ENCODE measurements at regions of chr2 and their contacts with region 1.

Region 1: DNA sequence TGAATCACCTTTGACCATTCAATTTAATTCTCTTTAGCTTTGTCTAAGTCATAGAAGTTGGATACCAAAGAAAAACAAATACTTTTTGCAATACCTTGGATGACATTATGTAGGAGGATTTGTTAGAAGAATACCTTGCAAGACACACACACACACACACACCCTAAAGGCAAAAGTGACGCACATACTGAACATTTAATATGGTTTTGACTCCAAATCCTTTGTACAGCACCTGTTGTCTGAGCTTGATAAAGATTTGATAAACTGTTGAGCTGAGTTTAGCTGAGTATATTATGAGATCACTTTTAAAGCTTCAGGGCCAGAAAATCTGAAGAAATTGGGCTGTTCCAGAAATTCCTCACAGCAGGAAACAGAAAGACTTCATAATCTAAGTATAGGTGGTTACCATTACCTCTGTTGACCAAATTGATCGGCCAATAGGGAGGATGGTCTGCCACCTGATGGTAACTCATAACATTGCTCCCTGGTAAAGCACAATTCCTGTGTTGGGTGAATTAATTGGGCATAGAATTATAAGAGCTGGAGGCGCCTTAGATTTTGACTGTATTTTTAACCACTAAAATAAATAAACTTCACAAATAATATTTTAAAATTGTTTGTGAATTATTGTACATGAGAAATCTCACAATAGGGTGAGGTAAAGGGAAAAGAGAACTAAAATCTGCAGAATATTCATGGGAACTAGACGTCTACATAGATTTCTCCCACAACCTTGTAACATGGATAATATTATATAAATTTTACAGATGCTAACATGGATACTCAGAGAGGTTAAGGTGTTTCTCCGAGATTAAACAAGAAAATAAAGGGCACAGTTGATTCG is 21.9 kb upstream of the RPIA start:
- DNase-seq: peak; percentile 53
- H3K4me3 ChIP-seq: no peak overlapping the region
- H3K27ac ChIP-seq: no peak overlapping the region
- H3K4me1 ChIP-seq: no peaks in the 10 kb centered on the region
- H3K27me3 ChIP-seq: no peaks in the 10 kb centered on the region
- CTCF ChIP-seq: peak; percentile 72
- EP300 ChIP-seq: no peak
- RAD21 ChIP-seq: peak; percentile 81

Region 2: GRCh38 chr2:88568179-88568578 is 101.4 kb before region 1 on chr2:
- CTCF ChIA-PET with region 1: interaction called, 12 read pairs
- POLR2A ChIA-PET with region 1: no interaction called
- DNase-seq: no peak
- H3K4me3 ChIP-seq: no peak overlapping the region
- H3K27ac ChIP-seq: no peak overlapping the region
- H3K4me1 ChIP-seq: no peaks in the 10 kb centered on the region; a peak in 1 of 4 replicates
- H3K27me3 ChIP-seq: no peaks in the 10 kb centered on the region
- CTCF ChIP-seq: no peak
- EP300 ChIP-seq: no peak
- RAD21 ChIP-seq: no peak

Region 3: DNA sequence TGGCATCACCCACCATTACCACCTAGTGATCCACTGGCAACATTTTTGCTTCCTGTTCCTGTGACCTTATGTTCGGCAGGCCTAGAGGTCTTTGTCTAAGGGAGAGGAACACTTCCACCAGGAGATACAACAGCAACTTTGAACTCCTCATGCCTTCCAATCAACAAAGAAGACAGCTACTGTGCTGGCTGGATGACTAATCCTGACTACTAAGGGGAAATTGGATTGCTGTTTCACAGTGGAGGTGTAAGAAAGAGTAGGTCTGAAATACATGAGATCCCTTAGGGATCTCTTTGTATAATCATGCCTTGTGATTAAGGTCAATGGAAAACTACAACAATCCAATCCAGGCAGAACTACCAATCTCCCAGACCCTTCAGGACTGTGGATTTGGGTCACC is 87.6 kb before region 1 on chr2:
- CTCF ChIA-PET with region 1: interaction called, 308 read pairs
- POLR2A ChIA-PET with region 1: no interaction called
- DNase-seq: no peak
- H3K4me3 ChIP-seq: no peak overlapping the region
- H3K27ac ChIP-seq: no peak overlapping the region
- H3K4me1 ChIP-seq: no peaks in the 10 kb centered on the region; a peak in 1 of 4 replicates
- H3K27me3 ChIP-seq: no peaks in the 10 kb centered on the region
- CTCF ChIP-seq: no peak
- EP300 ChIP-seq: no peak
- RAD21 ChIP-seq: no peak

Region 4: DNA sequence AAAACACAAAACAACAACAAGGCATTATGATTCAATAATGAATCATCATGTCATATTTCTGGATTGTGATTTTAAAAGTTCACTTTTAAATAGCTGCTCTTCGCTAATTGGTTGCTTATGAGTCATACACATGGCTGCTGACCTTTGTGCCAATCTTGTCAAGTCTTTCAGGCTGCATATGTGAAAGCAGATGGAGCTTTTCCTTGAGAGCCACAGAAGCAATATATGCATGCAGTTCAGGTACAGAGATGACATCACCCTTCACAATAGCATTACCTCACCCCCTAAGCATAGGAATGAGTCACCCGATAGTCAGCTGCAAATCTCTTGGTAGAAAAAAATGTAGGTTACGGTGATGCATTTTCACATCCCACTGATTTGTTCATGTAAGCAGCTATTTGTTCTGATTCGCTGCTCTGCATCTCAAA is 69.5 kb before region 1 on chr2:
- CTCF ChIA-PET with region 1: interaction called, 308 read pairs
- POLR2A ChIA-PET with region 1: no interaction called
- DNase-seq: peak; percentile 35
- H3K4me3 ChIP-seq: peak overlapping the region; percentile 17; a peak in 2 of 4 replicates
- H3K27ac ChIP-seq: peak overlapping the region; percentile 86 to 89
- H3K4me1 ChIP-seq: peaks cover 26 to 27% of the 10 kb centered on the region in 2 experiments
- H3K27me3 ChIP-seq: no peaks in the 10 kb centered on the region
- CTCF ChIP-seq: no peak
- EP300 ChIP-seq: peak in 1 of 2 experiments; percentile 50; a peak in 2 of 4 replicates
- RAD21 ChIP-seq: no peak

Region 5: DNA sequence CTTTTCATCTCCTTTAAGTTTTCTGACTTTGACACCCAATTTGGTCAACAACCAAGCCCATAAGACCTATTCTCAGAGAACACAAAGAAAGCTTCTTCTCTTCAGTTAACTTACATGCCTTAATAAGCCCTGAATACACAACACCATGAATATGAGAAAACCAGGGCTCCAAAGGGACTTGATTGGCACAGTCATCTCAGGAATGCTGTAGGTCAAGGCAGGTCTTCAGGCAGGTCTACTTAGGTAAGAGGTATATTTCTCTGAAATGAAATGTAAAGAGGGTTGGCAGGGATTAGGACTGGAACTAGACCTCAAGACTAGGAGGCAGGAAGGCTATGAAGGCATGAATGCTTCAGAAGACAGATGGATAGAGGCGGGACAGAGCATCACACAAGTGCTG is 17.9 kb before region 1 on chr2:
- CTCF ChIA-PET with region 1: interaction called, 32 read pairs
- POLR2A ChIA-PET with region 1: no interaction called
- DNase-seq: no peak
- H3K4me3 ChIP-seq: no peak overlapping the region
- H3K27ac ChIP-seq: no peak overlapping the region
- H3K4me1 ChIP-seq: peaks cover 0 to 5% of the 10 kb centered on the region in 2 experiments; a peak in 2 of 4 replicates
- H3K27me3 ChIP-seq: no peaks in the 10 kb centered on the region
- CTCF ChIP-seq: no peak
- EP300 ChIP-seq: no peak
- RAD21 ChIP-seq: no peak

Region 6: GRCh38 chr2:88680266-88680902 is 10.8 kb after region 1 on chr2:
- CTCF ChIA-PET with region 1: interaction called, 19 read pairs
- POLR2A ChIA-PET with region 1: no interaction called
- DNase-seq: no peak
- H3K4me3 ChIP-seq: no peak overlapping the region
- H3K27ac ChIP-seq: no peak overlapping the region
- H3K4me1 ChIP-seq: no peaks in the 10 kb centered on the region; a peak in 1 of 4 replicates
- H3K27me3 ChIP-seq: no peaks in the 10 kb centered on the region
- CTCF ChIP-seq: no peak
- EP300 ChIP-seq: no peak
- RAD21 ChIP-seq: no peak

Region 7: DNA sequence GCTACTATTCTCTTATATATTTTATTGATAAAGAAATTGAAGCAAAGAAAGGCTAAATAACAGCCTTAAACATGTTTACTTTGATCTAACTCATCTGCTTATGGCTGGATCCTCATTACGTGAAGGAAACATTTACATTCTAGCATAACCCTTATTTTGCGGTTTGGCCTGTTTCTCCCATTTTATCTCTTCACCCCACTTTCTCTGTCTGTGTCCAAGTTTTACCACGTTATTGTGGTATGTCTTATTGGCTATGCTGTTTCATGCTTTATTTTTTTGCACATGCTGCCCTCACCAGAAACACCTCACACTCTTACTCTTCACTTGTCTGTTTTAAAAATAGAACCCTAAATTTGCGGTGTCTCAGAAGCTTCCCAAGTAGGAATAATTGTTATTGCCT is 100.4 kb after region 1 on chr2:
- CTCF ChIA-PET with region 1: no interaction called
- POLR2A ChIA-PET with region 1: no interaction called
- DNase-seq: no peak
- H3K4me3 ChIP-seq: no peak overlapping the region
- H3K27ac ChIP-seq: no peak overlapping the region
- H3K4me1 ChIP-seq: peaks cover 0 to 3% of the 10 kb centered on the region in 2 experiments; a peak in 1 of 4 replicates
- H3K27me3 ChIP-seq: no peaks in the 10 kb centered on the region
- CTCF ChIP-seq: no peak
- EP300 ChIP-seq: no peak
- RAD21 ChIP-seq: no peak

Measured in SK-N-SH (cell line).